H1 (cell line): ENCODE measurements at regions of chr20 and their contacts with region 1.

Region 1: GRCh38 chr20:62900052-62900691 is 26.1 kb downstream of the DIDO1 start:
- DNase-seq: peak; percentile 51 to 88
- H3K4me3 ChIP-seq: 0 out of 8 replicates have a peak overlapping the region, but pooled peaks of 1 of the 4 experiments have one; percentile 17
- H3K27ac ChIP-seq: peak overlapping the region; percentile 55
- H3K4me1 ChIP-seq: peaks cover 9 to 18% (median 15%) of the 10 kb centered on the region in 4 experiments
- H3K27me3 ChIP-seq: no peaks in the 10 kb centered on the region
- CTCF ChIP-seq: peak; percentile 93 to 96 (median 95)
- EP300 ChIP-seq: no peak
- POLR2A ChIP-seq: peak; percentile 30 to 78; a peak in 2 of 3 replicates
- RAD21 ChIP-seq: peak; percentile 67 to 78

Region 2: GRCh38 chr20:62875419-62876361 is 24.5 kb before region 1 on chr20:
- CTCF ChIA-PET with region 1: interaction called, 31 read pairs
- POLR2A ChIA-PET with region 1: interaction called, 10 read pairs
- DNase-seq: no peak
- H3K4me3 ChIP-seq: no peak overlapping the region
- H3K27ac ChIP-seq: no peak overlapping the region
- H3K4me1 ChIP-seq: peaks cover 0 to 3% (median 0%) of the 10 kb centered on the region in 4 experiments; a peak in 3 of 7 replicates
- H3K27me3 ChIP-seq: no peaks in the 10 kb centered on the region
- CTCF ChIP-seq: no peak
- EP300 ChIP-seq: no peak
- POLR2A ChIP-seq: no peak
- RAD21 ChIP-seq: no peak

Region 3: DNA sequence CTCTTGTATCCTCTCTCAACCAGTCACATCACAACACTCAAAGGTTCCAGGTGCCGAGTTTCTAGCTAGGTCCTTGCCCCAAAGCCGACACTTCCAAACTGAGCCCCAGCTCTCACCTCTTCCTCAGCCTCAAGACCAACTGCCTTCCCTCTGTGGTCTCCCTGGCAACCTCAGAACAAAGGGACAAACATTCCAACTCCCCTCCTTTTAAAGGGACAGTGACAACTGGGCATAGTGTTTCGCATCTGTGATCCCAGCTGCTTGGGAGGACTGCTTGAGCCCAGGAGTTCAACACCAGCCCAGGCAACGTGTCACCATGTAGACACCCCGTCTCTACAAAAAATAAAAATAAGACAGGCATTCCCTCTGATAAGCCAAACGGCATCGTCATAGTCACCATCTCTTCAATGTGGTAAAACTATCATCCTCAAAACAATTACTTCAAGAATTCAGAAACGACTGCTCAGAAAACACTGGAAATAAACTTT is 14.8 kb after region 1 on chr20:
- CTCF ChIA-PET with region 1: interaction called, 35 read pairs
- POLR2A ChIA-PET with region 1: interaction called, 52 read pairs
- DNase-seq: no peak
- H3K4me3 ChIP-seq: no peak overlapping the region; a peak in 1 of 8 replicates
- H3K27ac ChIP-seq: peak overlapping the region; percentile 35; the same call in 1 of the 2 replicates
- H3K4me1 ChIP-seq: peaks cover 14 to 37% (median 34%) of the 10 kb centered on the region in 4 experiments; a peak in 6 of 7 replicates
- H3K27me3 ChIP-seq: no peaks in the 10 kb centered on the region
- CTCF ChIP-seq: no peak
- EP300 ChIP-seq: peak in 1 of 2 experiments; percentile 58; a peak in 1 of 3 replicates
- POLR2A ChIP-seq: peak; percentile 54 to 68; a peak in 2 of 3 replicates
- RAD21 ChIP-seq: no peak

Region 4: GRCh38 chr20:62926239-62927104 is 26.3 kb after region 1 on chr20 and contains the start of gene DIDO1:
- CTCF ChIA-PET with region 1: interaction called, 27 read pairs
- POLR2A ChIA-PET with region 1: interaction called, 81 read pairs
- DNase-seq: peak in 1 of 2 experiments; percentile 90
- H3K4me3 ChIP-seq: peak within 1 kb of the TSS; percentile 76 to 99 (median 94)
- H3K27ac ChIP-seq: peak within 1 kb of the TSS; percentile 86
- H3K4me1 ChIP-seq: peaks cover 9 to 39% (median 23%) of the 10 kb centered on the region in 4 experiments
- H3K27me3 ChIP-seq: no peaks in the 10 kb centered on the region
- CTCF ChIP-seq: peak; percentile 28 to 45 (median 43)
- EP300 ChIP-seq: no peak
- POLR2A ChIP-seq: peak in 1 of 2 experiments; percentile 40
- RAD21 ChIP-seq: no peak
- total RNA-seq, gene DIDO1: 82.8 and 83.2 TPM in 2 replicates

Region 5: GRCh38 chr20:62946918-62947317 is 46.7 kb after region 1 on chr20:
- CTCF ChIA-PET with region 1: interaction called, 26 read pairs
- POLR2A ChIA-PET with region 1: interaction called, 14 read pairs
- DNase-seq: no peak
- H3K4me3 ChIP-seq: no peak overlapping the region
- H3K27ac ChIP-seq: no peak overlapping the region
- H3K4me1 ChIP-seq: no peaks in the 10 kb centered on the region
- H3K27me3 ChIP-seq: no peaks in the 10 kb centered on the region
- CTCF ChIP-seq: no peak
- EP300 ChIP-seq: no peak
- POLR2A ChIP-seq: no peak
- RAD21 ChIP-seq: no peak